ENCODE measurements at regions of chr1 and their contacts with region 1.

Region 1: DNA sequence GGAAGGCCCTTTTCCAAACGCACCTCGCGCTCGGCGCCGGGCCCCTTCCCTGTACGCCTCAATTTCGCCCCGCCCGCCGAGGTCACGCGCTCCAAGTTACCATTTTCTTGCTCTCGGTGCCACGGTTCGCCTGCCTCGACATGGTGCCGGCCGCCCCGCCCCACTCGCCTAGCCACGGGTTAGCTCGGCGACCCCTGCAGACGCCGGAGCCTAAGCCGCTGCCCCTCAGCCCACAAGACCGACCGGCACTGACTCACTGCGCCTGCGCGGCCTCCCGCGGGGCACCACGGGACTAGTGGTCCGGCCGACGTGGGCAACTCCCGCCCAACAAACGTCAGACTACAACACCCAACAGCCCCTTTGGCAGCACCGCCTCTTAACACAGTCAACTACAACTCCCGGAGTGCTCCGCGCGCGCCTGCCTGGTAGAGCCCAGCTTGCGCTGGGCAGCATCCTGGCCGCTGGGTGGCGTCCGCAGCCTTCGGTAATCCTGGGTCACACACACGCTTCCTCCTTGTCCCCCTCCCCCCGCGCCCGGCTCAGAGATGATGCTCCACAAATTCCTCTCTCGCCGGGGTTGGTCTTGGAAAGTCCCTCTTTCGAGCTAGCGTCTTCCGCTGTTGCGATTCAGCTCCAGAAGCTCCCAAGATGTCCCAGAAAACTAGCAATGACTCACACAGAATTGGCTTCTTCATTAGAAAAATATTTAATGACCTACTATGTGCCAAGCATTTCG is at the start of gene TRAPPC3:
- DNase-seq: peak; percentile 98 to 100
- H3K4me3 ChIP-seq: peak within 1 kb of the TSS; percentile 67
- H3K27ac ChIP-seq: peak within 1 kb of the TSS; percentile 95
- H3K4me1 ChIP-seq: peaks cover 34% of the 10 kb centered on the region
- H3K27me3 ChIP-seq: no peaks in the 10 kb centered on the region
- CTCF ChIP-seq: peak; percentile 89
- total RNA-seq, gene TRAPPC3: 112 and 116 TPM in 2 replicates

Region 2: GRCh38 chr1:36099681-36100341 is 49.6 kb before region 1 on chr1:
- CTCF ChIA-PET with region 1: interaction called, 3 read pairs
- POLR2A ChIA-PET with region 1: no interaction called
- intact Hi-C with region 1: loop called (anchors 1 kb)
- DNase-seq: peak; percentile 71 to 94
- H3K4me3 ChIP-seq: no peak overlapping the region
- H3K27ac ChIP-seq: no peak overlapping the region
- H3K4me1 ChIP-seq: peaks cover 4% of the 10 kb centered on the region; the same call in 1 of the 2 replicates
- H3K27me3 ChIP-seq: no peaks in the 10 kb centered on the region
- CTCF ChIP-seq: peak; percentile 91

Region 3: DNA sequence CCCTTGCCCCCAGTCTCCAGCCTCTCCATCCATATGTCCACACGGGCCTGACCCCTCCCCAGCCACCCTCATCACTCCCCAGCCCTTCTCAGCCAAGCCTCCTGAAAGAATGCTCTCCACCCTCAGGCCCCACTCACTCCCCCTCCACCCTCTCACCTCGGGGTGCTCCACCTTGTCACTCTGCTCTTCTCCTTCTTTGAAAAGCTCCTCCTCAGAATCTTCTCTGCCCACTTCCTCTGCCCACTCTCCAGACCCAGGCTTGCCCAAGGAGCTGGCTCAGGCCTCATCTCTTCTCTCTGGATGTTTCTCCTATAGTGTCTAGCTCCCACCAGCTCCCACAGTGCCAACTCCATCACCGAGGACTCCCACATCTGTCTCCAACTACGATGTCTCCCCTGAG is 38.3 kb before region 1 on chr1:
- CTCF ChIA-PET with region 1: no interaction called
- POLR2A ChIA-PET with region 1: no interaction called
- intact Hi-C with region 1: no loop called
- DNase-seq: no peak
- H3K4me3 ChIP-seq: no peak overlapping the region
- H3K27ac ChIP-seq: no peak overlapping the region
- H3K4me1 ChIP-seq: peaks cover 17% of the 10 kb centered on the region
- H3K27me3 ChIP-seq: no peaks in the 10 kb centered on the region
- CTCF ChIP-seq: no peak

Region 4: DNA sequence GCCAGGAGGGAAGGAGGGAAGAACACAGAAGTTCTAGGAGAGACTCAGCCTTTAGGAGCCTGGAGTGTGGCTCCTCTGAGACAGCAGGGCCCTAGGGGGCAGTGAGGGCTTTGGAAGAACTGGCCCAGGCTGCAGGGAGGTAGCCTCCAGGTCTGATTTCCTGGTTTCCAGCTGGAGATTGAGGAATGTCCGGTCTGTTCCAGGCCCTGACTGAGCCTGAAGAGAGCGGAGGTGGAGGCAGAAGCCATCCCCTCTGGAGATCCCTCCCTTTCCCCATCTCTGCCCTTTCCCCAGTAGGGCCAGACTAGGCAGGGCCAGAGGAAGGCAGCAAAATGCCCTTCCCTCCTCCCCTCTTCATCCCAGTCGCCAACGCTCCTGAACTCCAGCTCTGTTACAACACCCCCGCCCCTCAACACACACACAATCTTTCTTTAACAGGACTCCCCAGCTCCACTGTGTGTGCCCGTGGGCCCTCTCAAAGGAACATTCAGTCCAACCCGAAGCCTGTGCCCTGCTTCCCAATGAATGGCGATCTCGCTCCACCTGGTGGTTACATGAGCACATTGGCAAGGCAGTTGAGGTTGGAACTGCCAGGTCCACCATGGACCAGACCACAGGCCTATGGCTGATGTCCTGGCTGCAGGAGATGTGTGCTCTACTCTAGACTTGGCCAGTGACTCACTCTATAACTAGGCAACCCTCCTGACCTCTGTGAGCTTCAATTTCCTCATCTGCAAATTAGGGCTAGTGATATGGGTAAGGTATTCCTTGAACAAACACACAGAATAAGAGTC is 38.6 kb after region 1 on chr1:
- CTCF ChIA-PET with region 1: interaction called, 42 read pairs
- POLR2A ChIA-PET with region 1: interaction called, 7 read pairs
- intact Hi-C with region 1: loop called (anchors 1 kb)
- DNase-seq: peak; percentile 78 to 88
- H3K4me3 ChIP-seq: no peak overlapping the region
- H3K27ac ChIP-seq: peak overlapping the region; percentile 53
- H3K4me1 ChIP-seq: peaks cover 9% of the 10 kb centered on the region; the same call in 1 of the 2 replicates
- H3K27me3 ChIP-seq: no peaks in the 10 kb centered on the region
- CTCF ChIP-seq: peak; percentile 92

Region 5: DNA sequence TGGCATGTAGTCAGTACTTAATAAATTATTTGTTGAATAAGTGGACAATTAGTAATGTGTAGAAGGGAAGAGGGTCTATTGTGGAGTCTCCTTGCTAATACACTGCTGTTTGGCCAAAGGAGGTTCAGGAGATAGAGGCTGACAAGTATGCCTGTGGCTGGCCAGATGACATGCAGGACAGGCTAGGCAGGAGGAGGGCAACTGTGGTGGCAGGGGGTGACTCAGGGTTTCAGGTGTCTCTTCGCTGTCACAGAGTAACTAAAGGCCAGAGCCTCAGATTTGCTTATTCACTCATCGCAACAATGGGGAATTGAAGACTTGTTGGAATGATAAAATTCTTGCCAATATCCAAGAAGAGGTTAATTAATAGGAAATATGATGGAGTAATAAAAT is 108.0 kb after region 1 on chr1:
- CTCF ChIA-PET with region 1: interaction called, 3 read pairs
- POLR2A ChIA-PET with region 1: interaction called, 4 read pairs
- intact Hi-C with region 1: loop called (anchors 1 kb)
- DNase-seq: peak; percentile 85 to 86
- H3K4me3 ChIP-seq: peak overlapping the region; percentile 35; the same call in 1 of the 2 replicates
- H3K27ac ChIP-seq: peak overlapping the region; percentile 99
- H3K4me1 ChIP-seq: peaks cover 54% of the 10 kb centered on the region
- H3K27me3 ChIP-seq: no peaks in the 10 kb centered on the region
- CTCF ChIP-seq: no peak

Region 6: DNA sequence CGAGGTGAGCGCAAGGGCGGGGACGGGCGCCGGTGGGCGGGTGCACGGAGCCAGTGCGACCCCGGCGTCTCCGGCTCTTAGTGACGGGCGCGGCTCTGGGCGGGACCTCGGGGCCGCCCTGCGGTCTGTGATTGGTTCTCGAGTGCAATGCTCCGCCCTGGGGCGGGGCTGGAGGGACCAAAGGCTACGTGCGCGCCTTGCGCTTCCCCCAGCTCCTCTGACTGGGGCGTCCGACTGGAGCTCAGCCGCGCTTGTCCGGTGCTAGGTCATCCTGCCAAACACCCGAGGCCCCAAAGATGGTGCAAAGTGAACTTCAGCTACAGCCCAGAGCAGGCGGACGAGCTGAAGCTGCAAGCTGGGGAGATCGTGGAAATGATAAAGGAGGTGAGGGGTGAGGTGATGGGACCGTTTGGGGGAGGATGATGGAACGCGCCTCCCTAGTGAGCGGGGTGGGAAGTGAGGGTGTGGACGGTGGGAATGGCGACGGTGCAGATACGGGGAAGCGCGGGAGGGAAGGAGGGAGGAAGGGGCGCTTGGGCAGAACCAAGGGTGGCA is 157.6 kb after region 1 on chr1:
- CTCF ChIA-PET with region 1: interaction called, 10 read pairs
- POLR2A ChIA-PET with region 1: interaction called, 3 read pairs
- intact Hi-C with region 1: no loop called
- DNase-seq: peak; percentile 79 to 95
- H3K4me3 ChIP-seq: peak overlapping the region; percentile 68
- H3K27ac ChIP-seq: peak overlapping the region; percentile 57
- H3K4me1 ChIP-seq: peaks cover 11% of the 10 kb centered on the region
- H3K27me3 ChIP-seq: no peaks in the 10 kb centered on the region
- CTCF ChIP-seq: no peak

Region 7: DNA sequence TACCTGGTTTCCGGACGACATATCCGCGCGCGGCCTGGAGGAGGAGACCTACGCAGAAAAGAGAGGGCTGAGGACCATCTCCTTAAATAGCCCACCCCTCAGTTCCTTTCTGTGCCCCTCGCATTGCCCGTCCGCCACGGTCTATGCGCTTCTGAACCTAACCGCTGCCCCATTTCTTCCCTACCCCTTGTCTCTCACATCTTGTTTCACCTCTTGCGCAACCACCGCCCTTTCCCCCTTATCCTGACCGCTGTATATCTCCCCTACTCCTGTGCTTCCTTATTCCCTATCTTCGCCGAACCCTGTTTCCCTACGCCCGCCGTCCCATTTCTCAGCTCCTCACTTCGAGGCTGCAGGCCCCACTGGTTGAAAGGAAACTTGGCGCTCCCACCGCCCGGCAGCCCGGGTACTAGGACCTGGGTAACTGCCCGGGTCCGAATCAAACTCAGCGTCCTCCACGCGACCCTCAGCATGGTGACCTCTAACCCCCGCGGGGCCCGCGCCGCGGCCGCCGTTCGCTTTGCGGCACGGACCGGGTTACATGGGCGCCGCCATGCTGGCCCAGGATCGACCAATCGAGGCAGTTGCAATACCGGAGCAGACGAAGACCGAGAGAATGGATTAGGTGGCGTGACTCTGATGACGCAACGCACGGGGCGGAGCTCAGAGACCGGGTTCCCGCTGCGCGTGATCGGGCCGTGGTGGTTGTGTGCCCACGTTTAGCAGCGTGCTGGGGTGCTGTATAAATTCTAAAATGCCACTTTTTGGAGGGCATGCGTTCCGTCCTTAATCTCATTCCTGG is 314.6 kb after region 1 on chr1 and contains the start of gene MRPS15:
- CTCF ChIA-PET with region 1: interaction called, 10 read pairs
- POLR2A ChIA-PET with region 1: no interaction called
- intact Hi-C with region 1: no loop called
- DNase-seq: peak; percentile 89 to 95
- H3K4me3 ChIP-seq: peak within 1 kb of the TSS; percentile 96
- H3K27ac ChIP-seq: peak within 1 kb of the TSS; percentile 93
- H3K4me1 ChIP-seq: peaks cover 33% of the 10 kb centered on the region
- H3K27me3 ChIP-seq: no peaks in the 10 kb centered on the region
- CTCF ChIP-seq: no peak
- total RNA-seq, gene MRPS15: 138 and 200 TPM in 2 replicates

Measured in PC-9 (cell line).